Mucosa of descending colon (tissue), 3 donors: ENCODE measurements at regions of chr13 and their contacts with region 1.

Region 1: DNA sequence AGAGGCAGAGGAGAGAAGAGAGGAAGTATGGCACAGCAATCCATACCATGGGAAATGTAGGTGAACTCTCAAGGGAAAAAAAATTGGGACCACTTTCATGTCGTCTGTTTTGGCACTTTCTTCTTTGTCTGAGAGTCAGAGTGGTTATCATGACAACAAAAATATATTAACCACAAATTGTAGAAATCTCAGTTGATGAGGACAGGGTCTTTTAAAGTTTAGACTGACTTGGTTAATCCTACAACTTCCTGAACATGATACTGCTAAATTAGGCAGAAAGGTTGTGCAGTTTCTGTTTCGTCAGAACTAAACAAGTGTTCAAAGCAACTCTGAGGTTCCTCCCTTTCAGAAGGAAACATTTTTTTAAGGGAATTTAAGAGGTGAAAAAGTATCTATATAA is 15.2 kb downstream of the KLF5 start:
- DNase-seq: no peak
- ATAC-seq: no peak
- H3K4me3 ChIP-seq: no peak overlapping the region
- H3K4me1 ChIP-seq: peaks cover 22% of the 10 kb centered on the region
- CTCF ChIP-seq: no peak

Region 2: DNA sequence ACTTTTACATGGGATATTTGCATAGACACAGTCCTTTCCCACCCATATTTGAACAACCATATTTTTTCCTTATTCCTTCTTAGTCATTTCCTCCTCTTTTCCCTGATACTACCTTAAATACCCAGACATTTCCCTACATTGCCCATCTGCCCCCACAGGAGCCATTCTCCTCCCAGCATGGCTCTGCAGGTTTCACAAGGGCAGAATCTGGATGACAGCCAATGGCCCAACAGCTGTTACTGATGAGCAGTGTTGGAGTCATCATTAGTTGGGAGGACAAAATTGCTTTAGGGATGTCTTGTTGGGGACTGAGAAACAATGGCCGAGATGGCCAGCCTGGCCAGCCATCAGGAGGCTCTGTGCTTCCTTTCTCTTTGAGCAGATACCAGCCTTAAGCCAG is 194.3 kb after region 1 on chr13:
- intact Hi-C with region 1: loop called in 1 of 2 experiments (anchors 10 kb)
- DNase-seq: peak; percentile 50 to 63 (median 58)
- ATAC-seq: peak; percentile 33
- H3K4me3 ChIP-seq: no peak overlapping the region
- H3K4me1 ChIP-seq: peaks cover 18% of the 10 kb centered on the region
- CTCF ChIP-seq: no peak